ENCODE measurements at regions of chrX and their contacts with region 1.

Region 1: GRCh38 chrX:14029425-14030173 is at the start of gene GEMIN8:
- DNase-seq: peak; percentile 95
- H3K4me3 Mint-ChIP-seq: peak within 1 kb of the TSS; percentile 77
- H3K27ac Mint-ChIP-seq: peak within 1 kb of the TSS; percentile 86
- H3K4me1 Mint-ChIP-seq: peaks cover 31% of the 10 kb centered on the region
- H3K27me3 Mint-ChIP-seq: peaks cover 13% of the 10 kb centered on the region
- CTCF ChIP-seq: no peak
- total RNA-seq, gene GEMIN8: 24.6 and 28.2 TPM in 2 replicates

Region 2: GRCh38 chrX:12814420-12814819 is 1215.2 kb before region 1 on chrX:
- CTCF ChIA-PET with region 1: no interaction called
- POLR2A ChIA-PET with region 1: no interaction called
- intact Hi-C with region 1: loop called (anchors 5 kb)
- DNase-seq: peak; percentile 64
- H3K4me3 Mint-ChIP-seq: no peak overlapping the region
- H3K27ac Mint-ChIP-seq: no peak overlapping the region
- H3K4me1 Mint-ChIP-seq: peaks cover 5% of the 10 kb centered on the region
- H3K27me3 Mint-ChIP-seq: peaks cover 21% of the 10 kb centered on the region
- CTCF ChIP-seq: peak; percentile 57

Region 3: DNA sequence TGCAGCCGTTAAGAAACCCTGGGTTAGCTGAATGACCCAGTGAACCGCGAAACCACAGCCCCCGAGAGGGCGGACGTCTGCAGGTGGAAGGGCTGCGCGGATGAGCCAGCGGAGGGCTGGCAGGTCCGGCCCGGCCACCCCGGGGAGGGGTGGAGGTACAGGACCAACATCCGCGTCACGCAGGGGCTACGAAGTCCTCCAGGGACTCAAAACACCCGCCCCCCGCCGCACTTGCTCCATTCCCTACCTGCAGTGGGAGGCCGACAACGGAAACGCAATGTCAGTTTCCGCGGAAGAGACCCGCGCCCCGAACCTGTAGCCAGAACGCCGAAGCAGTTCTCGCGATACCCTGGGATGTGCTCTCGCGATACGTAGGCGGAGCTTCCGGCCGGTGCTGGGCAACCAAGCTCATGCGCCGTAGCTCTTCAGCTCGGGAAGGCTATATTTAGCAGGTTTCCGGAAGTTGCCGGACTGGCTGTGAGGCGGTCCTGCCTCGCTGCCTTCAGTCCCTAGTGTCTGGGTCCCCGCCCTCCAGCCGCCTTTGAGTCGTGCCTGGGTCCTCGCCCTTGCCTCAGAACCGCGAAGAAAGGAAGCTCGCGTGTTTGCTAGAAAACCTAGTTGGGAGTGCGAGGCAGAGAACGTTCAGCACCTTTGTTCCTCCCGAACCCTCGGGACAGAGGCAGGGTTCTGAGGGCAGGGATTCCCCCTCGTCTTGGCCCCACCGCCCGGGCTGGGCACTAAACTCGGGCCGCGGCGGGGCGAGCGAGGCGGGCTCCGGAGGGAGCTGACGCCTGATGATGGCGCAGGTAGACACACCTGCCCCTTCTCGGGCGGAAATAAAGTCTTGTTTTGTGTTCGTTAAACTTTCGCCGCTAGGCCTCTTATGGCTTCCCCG is 295.1 kb before region 1 on chrX and contains the starts of genes OFD1 and TRAPPC2:
- CTCF ChIA-PET with region 1: interaction called, 18 read pairs
- POLR2A ChIA-PET with region 1: interaction called, 47 read pairs
- intact Hi-C with region 1: no loop called
- DNase-seq: peak; percentile 97
- H3K4me3 Mint-ChIP-seq: peak within 1 kb of the TSS; percentile 96
- H3K27ac Mint-ChIP-seq: peak within 1 kb of the TSS; percentile 98
- H3K4me1 Mint-ChIP-seq: peaks cover 17% of the 10 kb centered on the region
- H3K27me3 Mint-ChIP-seq: no peaks in the 10 kb centered on the region
- CTCF ChIP-seq: no peak
- total RNA-seq, gene OFD1: 44.3 and 44.8 TPM in 2 replicates
- total RNA-seq, gene TRAPPC2: 16.5 and 21.7 TPM in 2 replicates

Region 4: GRCh38 chrX:13774696-13775095 is 254.9 kb before region 1 on chrX:
- CTCF ChIA-PET with region 1: interaction called, 11 read pairs
- POLR2A ChIA-PET with region 1: interaction called, 3 read pairs
- intact Hi-C with region 1: no loop called
- DNase-seq: peak; percentile 19
- H3K4me3 Mint-ChIP-seq: no peak overlapping the region
- H3K27ac Mint-ChIP-seq: no peak overlapping the region
- H3K4me1 Mint-ChIP-seq: no peaks in the 10 kb centered on the region
- H3K27me3 Mint-ChIP-seq: no peaks in the 10 kb centered on the region
- CTCF ChIP-seq: no peak

Region 5: GRCh38 chrX:13898083-13898482 is 131.5 kb before region 1 on chrX:
- CTCF ChIA-PET with region 1: interaction called, 8 read pairs
- POLR2A ChIA-PET with region 1: interaction called, 36 read pairs
- intact Hi-C with region 1: loop called (anchors 1 kb)
- DNase-seq: peak; percentile 62
- H3K4me3 Mint-ChIP-seq: no peak overlapping the region
- H3K27ac Mint-ChIP-seq: peak overlapping the region; percentile 83
- H3K4me1 Mint-ChIP-seq: peaks cover 34% of the 10 kb centered on the region
- H3K27me3 Mint-ChIP-seq: peaks cover 13% of the 10 kb centered on the region
- CTCF ChIP-seq: no peak

Region 6: GRCh38 chrX:13938051-13938828 is 91.4 kb before region 1 on chrX:
- CTCF ChIA-PET with region 1: interaction called, 11 read pairs
- POLR2A ChIA-PET with region 1: interaction called, 63 read pairs
- intact Hi-C with region 1: loop called (anchors 5 kb)
- DNase-seq: peak; percentile 40
- H3K4me3 Mint-ChIP-seq: peak overlapping the region; percentile 81
- H3K27ac Mint-ChIP-seq: peak overlapping the region; percentile 79
- H3K4me1 Mint-ChIP-seq: peaks cover 5% of the 10 kb centered on the region
- H3K27me3 Mint-ChIP-seq: peaks cover 56% of the 10 kb centered on the region
- CTCF ChIP-seq: no peak

Region 7: GRCh38 chrX:14164828-14165227 is 135.2 kb after region 1 on chrX:
- CTCF ChIA-PET with region 1: no interaction called
- POLR2A ChIA-PET with region 1: no interaction called
- intact Hi-C with region 1: no loop called
- DNase-seq: no peak
- H3K4me3 Mint-ChIP-seq: no peak overlapping the region
- H3K27ac Mint-ChIP-seq: no peak overlapping the region
- H3K4me1 Mint-ChIP-seq: no peaks in the 10 kb centered on the region
- H3K27me3 Mint-ChIP-seq: peaks cover 41% of the 10 kb centered on the region
- CTCF ChIP-seq: no peak